ENCODE measurements at regions of chr2 and their contacts with region 1.

Region 1: GRCh38 chr2:200747668-200748618 is 63.8 kb upstream of the BZW1 start:
- DNase-seq: peak; percentile 97
- ATAC-seq: peak; percentile 96
- H3K4me3 ChIP-seq: peak overlapping the region; percentile 18; the same call in 1 of the 2 replicates
- H3K27ac ChIP-seq: peak overlapping the region; percentile 84
- H3K4me1 ChIP-seq: peaks cover 23% of the 10 kb centered on the region
- H3K27me3 ChIP-seq: no peaks in the 10 kb centered on the region
- CTCF ChIP-seq: no peak
- POLR2A ChIP-seq: 0 out of 2 replicates have a peak, but pooled peaks have one; percentile 10
- RAD21 ChIP-seq: peak; percentile 29

Region 2: GRCh38 chr2:200787348-200788120 is 39.6 kb after region 1 on chr2:
- CTCF ChIA-PET with region 1: no interaction called
- POLR2A ChIA-PET with region 1: interaction called, 12 read pairs
- dilution Hi-C with region 1: no loop called
- in situ Hi-C with region 1: no loop called
- intact Hi-C with region 1: loop called (anchors 2 kb)
- DNase-seq: peak; percentile 98
- ATAC-seq: peak; percentile 74
- H3K4me3 ChIP-seq: no peak overlapping the region; the same call in 1 of the 2 replicates
- H3K27ac ChIP-seq: peak overlapping the region; percentile 88
- H3K4me1 ChIP-seq: peaks cover 10% of the 10 kb centered on the region
- H3K27me3 ChIP-seq: no peaks in the 10 kb centered on the region
- CTCF ChIP-seq: no peak
- POLR2A ChIP-seq: peak; percentile 65
- RAD21 ChIP-seq: no peak

Region 3: DNA sequence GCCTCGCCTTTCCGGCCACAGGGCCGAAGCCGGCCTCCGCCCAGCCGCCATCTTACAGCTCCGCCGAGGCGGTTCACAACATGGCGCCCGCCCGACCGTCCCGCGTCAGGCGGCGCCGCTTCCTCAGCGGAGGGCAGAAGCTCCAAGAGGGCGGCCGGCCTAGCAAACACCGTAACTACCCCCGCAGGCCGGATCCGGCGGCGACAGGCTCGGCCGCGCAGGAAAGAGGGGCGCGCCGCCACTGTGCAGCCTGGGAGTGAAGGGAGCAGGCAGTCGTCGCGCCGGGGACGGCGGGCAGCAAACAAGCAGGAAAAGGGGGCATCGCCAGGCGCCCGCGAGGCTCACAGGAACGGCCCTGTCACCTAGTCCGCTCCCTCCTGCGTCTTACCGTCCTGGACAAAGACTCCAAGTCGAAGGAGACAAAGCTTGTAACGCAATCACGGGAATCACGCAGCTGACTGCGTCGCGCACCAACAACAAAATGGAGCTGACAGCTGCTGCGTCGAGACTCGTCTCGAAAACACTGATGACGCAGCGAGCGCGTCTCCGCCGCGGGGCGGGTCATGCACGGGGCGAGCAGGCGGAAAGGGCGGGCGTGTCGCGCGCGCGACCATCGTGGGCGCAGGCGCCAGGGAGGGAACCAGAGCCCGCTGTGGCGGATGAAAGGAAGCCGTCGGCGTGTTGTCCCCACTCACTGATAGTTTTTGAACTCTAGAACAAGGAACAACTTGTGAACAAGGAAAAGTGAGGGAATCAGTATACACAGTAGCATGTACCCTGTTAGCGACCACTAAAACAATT is 116.4 kb after region 1 on chr2 and contains the start of gene CLK1:
- CTCF ChIA-PET with region 1: no interaction called
- POLR2A ChIA-PET with region 1: no interaction called
- dilution Hi-C with region 1: no loop called
- in situ Hi-C with region 1: no loop called
- intact Hi-C with region 1: loop called (anchors 5 kb)
- DNase-seq: peak; percentile 93
- ATAC-seq: peak; percentile 89
- H3K4me3 ChIP-seq: peak within 1 kb of the TSS; percentile 60
- H3K27ac ChIP-seq: peak within 1 kb of the TSS; percentile 88
- H3K4me1 ChIP-seq: peaks cover 5% of the 10 kb centered on the region
- H3K27me3 ChIP-seq: no peaks in the 10 kb centered on the region
- CTCF ChIP-seq: no peak
- POLR2A ChIP-seq: peak; percentile 99
- RAD21 ChIP-seq: no peak
- total RNA-seq, gene CLK1: 26.2 and 43.9 TPM in 2 replicates